BJ (cell line): ENCODE measurements at regions of chr15 and their contacts with region 1.

Region 1: DNA sequence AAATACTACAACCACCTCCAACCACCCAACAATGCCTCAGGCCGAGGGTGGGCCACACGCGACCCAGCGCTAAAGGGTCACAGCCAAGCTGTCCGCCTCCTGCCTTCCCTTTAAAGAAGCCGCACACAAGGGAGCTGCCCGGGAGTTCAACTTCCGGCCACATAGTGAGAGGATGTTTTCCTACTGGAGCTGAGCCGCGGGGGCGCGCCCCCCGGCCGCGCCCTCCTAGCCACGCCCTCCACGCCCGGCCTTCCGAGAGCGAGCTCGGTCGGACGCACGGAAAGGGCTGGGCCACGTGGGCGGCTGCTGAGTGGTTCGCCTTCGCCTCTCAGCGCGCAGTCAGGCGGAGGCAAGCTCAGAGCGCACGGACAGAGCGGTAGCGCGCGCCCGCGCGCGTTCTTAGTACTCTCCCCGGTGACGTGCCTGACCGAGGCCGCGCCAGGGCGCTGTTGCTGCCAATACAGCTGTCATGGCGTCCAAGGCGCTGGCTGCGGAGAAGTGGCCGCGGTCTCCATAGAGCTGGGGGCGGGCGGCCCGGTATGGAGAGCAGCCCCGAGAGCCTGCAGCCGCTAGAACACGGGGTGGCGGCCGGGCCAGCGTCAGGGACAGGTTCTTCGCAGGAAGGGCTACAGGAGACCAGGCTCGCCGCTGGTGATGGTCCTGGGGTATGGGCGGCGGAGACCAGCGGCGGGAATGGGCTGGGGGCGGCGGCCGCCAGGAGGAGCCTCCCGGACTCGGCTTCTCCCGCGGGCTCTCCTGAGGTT is at the start of gene MINDY2:
- DNase-seq: peak; percentile 94
- H3K4me3 ChIP-seq: peak within 1 kb of the TSS; percentile 90
- H3K27me3 ChIP-seq: no peaks in the 10 kb centered on the region
- CTCF ChIP-seq: peak; percentile 44; the same call in 1 of the 2 replicates
- polyA plus RNA-seq, gene MINDY2: 7.8 and 12.8 TPM in 2 replicates

Region 2: DNA sequence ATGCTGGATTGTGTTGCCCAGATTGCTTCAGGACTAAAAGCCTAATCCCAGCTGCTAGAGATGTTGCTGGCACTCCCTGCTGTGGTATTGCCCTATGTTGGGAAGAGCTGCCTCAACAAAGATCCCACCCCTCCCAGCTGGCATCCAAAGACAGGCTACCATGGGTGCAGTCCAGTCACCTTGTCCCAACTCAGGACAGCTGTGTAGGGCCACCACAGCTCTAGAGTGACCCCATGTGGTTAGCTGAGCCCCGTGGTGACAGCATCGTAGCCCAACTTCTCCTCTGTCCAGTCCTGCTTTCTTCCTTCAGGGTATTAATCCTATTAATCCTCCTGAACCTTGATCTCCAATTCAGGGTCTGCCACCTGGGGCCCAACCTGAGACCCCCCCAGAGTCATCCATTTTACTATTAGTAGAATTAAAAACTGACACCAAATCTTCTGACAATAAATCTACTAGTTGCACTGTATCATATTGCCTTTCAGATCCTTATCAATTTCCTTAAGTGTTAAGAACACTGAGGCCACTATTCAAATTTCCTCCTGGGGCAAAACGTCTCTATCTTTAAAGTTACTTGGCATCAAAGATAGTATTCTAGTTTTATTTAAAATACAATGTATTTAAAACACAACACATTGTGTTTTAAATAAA is 549.3 kb before region 1 on chr15:
- CTCF ChIA-PET with region 1: interaction called, 3 read pairs
- POLR2A ChIA-PET with region 1: interaction called, 13 read pairs
- DNase-seq: no peak
- H3K4me3 ChIP-seq: no peak overlapping the region
- H3K27me3 ChIP-seq: no peaks in the 10 kb centered on the region
- CTCF ChIP-seq: peak; percentile 62

Region 3: DNA sequence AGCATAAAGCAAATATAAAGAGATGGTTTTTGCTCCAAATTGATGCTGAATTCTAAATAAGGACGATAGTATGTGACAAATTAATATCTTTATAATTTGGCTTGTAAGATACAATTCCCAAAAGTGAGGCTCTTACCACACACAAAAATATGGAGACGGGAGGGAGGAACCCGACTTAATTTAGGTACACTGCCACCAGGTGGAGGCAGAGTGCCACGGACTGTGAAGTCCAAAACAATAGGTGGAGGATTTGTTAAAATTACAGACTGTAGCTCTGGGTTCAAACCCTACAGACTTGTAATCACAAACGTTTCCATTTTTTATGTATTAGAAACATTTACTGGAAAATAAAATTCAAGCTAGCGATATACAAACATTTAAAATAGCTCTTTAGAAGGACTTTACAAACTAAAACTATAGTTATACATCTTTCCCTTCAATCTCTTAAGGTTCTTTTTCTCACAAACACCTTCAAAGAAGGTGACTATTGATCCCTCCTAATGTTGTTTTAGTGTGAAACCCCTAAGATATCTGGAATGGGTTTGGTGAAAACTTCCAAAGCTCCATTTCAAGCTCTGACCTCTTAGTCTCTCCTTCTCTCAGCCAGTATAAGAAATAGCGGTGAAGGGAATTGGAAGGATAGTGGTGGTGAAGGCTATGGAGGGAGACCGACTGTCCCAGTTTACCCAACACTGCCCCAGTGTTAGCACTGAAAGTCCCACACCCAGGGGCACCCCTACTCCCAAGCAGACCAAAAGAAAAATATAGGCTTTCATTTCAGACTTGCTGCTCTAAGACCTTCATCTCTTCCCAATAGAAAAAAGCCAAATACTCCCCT is 543.1 kb before region 1 on chr15:
- CTCF ChIA-PET with region 1: interaction called, 13 read pairs
- POLR2A ChIA-PET with region 1: no interaction called
- DNase-seq: no peak
- H3K4me3 ChIP-seq: no peak overlapping the region
- H3K27me3 ChIP-seq: peaks cover 7% of the 10 kb centered on the region
- CTCF ChIP-seq: peak; percentile 77

Region 4: GRCh38 chr15:58433597-58434333 is 337.3 kb before region 1 on chr15:
- CTCF ChIA-PET with region 1: no interaction called
- POLR2A ChIA-PET with region 1: interaction called, 14 read pairs
- DNase-seq: no peak
- H3K4me3 ChIP-seq: no peak overlapping the region
- H3K27me3 ChIP-seq: no peaks in the 10 kb centered on the region
- CTCF ChIP-seq: no peak

Region 5: GRCh38 chr15:58749532-58750337 is 21.3 kb before region 1 on chr15 and contains the start of gene ADAM10:
- CTCF ChIA-PET with region 1: interaction called, 4 read pairs
- POLR2A ChIA-PET with region 1: interaction called, 27 read pairs
- DNase-seq: peak; percentile 96
- H3K4me3 ChIP-seq: peak within 1 kb of the TSS; percentile 97
- H3K27me3 ChIP-seq: no peaks in the 10 kb centered on the region
- CTCF ChIP-seq: no peak
- polyA plus RNA-seq, gene ADAM10: 106 and 142 TPM in 2 replicates

Region 6: DNA sequence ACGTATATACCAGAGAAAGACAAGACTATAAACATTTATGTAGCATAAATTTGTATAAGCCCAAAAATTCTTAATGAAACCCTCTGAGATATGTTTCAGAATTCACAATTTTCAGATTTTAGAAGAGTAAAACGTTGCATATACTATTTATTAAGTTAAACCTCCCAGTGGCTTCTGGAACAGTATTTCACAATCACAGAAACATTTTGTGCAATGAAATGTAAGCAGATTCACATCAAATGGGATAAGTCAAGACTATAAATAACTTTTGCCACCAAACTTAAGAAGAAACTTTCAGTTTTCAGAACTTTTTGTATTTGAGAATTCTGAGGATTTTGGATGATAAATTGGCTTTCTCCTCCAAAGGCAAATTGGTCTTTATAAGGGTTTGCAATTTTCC is 153.3 kb after region 1 on chr15:
- CTCF ChIA-PET with region 1: no interaction called
- POLR2A ChIA-PET with region 1: interaction called, 10 read pairs
- DNase-seq: no peak
- H3K4me3 ChIP-seq: no peak overlapping the region
- H3K27me3 ChIP-seq: no peaks in the 10 kb centered on the region
- CTCF ChIP-seq: no peak